Endothelial cell of umbilical vein (primary cell): ENCODE measurements at regions of chr14 and their contacts with region 1.

Region 1: GRCh38 chr14:56339855-56340701 is 221.9 kb downstream of the PELI2 start:
- DNase-seq: peak; percentile 89
- H3K4me3 ChIP-seq: no peak overlapping the region
- H3K27ac ChIP-seq: peak overlapping the region; percentile 55
- H3K4me1 ChIP-seq: peaks cover 43% of the 10 kb centered on the region
- H3K27me3 ChIP-seq: no peaks in the 10 kb centered on the region
- CTCF ChIP-seq: peak; percentile 86 to 94
- POLR2A ChIP-seq: no peak

Region 2: DNA sequence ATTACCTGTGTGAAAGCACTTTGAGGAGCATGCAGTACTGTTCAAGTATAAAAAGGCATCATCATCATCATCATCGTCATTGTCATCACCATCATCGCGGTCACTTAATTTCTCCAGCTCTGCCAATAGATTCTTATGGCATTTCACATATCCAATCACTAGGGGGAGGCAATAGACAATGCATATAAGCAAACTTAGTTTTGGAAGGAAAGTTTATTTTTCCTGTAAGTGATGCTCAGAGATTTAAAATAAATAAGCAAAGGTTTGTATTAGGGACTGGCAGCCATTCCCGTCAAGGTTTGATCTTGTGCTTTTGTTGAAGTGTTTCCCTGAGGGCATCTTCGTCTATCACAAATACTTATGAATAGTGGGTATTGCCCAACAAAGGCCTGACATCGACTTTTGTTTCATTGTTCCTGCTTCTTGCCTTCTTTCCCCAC is 632.7 kb before region 1 on chr14:
- CTCF ChIA-PET with region 1: interaction called, 27 read pairs
- POLR2A ChIA-PET with region 1: interaction called, 4 read pairs
- dilution Hi-C with region 1: no loop called
- intact Hi-C with region 1: loop called (anchors 1 kb)
- DNase-seq: peak; percentile 51
- H3K4me3 ChIP-seq: no peak overlapping the region
- H3K27ac ChIP-seq: no peak overlapping the region
- H3K4me1 ChIP-seq: no peaks in the 10 kb centered on the region
- H3K27me3 ChIP-seq: no peaks in the 10 kb centered on the region
- CTCF ChIP-seq: peak; percentile 28 to 53
- POLR2A ChIP-seq: no peak

Region 3: GRCh38 chr14:55846826-55847446 is 493.1 kb before region 1 on chr14:
- CTCF ChIA-PET with region 1: interaction called, 5 read pairs
- POLR2A ChIA-PET with region 1: no interaction called
- dilution Hi-C with region 1: no loop called
- intact Hi-C with region 1: loop called (anchors 1 kb)
- DNase-seq: no peak
- H3K4me3 ChIP-seq: no peak overlapping the region
- H3K27ac ChIP-seq: no peak overlapping the region
- H3K4me1 ChIP-seq: peaks cover 8% of the 10 kb centered on the region
- H3K27me3 ChIP-seq: no peaks in the 10 kb centered on the region
- CTCF ChIP-seq: no peak
- POLR2A ChIP-seq: no peak

Region 4: DNA sequence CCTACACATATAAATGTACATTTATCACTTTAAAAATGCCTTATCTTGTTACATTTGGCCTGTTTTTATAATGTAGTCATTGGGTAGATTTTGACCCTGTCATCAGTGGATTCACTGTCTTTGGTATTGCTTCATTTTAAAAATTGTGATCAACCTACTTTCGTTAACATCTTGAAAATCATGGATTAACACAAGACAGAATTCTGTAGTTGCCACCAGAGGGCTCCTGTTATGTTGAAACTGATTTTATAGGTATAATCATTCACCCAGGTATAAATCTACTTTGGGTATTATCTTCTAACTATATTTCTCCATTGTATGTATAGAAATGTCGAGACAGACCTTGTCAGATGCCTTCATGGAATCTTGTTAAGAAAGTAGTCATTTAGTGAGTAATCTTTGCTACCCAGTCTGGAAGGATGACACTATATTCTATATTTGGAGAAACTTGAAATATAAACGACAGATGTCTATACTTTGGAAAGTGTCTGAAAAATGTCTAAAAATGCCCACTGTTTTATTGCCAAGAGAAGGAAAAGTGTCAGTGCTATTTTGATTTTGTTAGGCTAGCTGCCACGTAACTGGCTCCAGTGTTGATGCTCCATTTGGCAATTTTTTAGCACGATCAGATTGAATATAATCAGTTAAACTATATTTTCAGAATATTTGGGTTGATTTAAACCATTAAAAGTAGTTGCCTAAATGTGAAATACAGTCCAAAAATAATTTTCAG is 92.4 kb before region 1 on chr14:
- CTCF ChIA-PET with region 1: interaction called, 30 read pairs
- POLR2A ChIA-PET with region 1: no interaction called
- dilution Hi-C with region 1: no loop called
- intact Hi-C with region 1: loop called (anchors 1 kb)
- DNase-seq: peak; percentile 48
- H3K4me3 ChIP-seq: no peak overlapping the region
- H3K27ac ChIP-seq: no peak overlapping the region
- H3K4me1 ChIP-seq: no peaks in the 10 kb centered on the region
- H3K27me3 ChIP-seq: no peaks in the 10 kb centered on the region
- CTCF ChIP-seq: peak in 1 of 2 donors; percentile 7
- POLR2A ChIP-seq: no peak

Region 5: GRCh38 chr14:56378475-56378877 is 38.4 kb after region 1 on chr14:
- CTCF ChIA-PET with region 1: interaction called, 7 read pairs
- POLR2A ChIA-PET with region 1: no interaction called
- dilution Hi-C with region 1: no loop called
- intact Hi-C with region 1: loop called (anchors 1 kb)
- DNase-seq: peak; percentile 90
- H3K4me3 ChIP-seq: no peak overlapping the region
- H3K27ac ChIP-seq: peak overlapping the region; percentile 54
- H3K4me1 ChIP-seq: peaks cover 24% of the 10 kb centered on the region
- H3K27me3 ChIP-seq: no peaks in the 10 kb centered on the region
- CTCF ChIP-seq: no peak
- POLR2A ChIP-seq: no peak

Region 6: DNA sequence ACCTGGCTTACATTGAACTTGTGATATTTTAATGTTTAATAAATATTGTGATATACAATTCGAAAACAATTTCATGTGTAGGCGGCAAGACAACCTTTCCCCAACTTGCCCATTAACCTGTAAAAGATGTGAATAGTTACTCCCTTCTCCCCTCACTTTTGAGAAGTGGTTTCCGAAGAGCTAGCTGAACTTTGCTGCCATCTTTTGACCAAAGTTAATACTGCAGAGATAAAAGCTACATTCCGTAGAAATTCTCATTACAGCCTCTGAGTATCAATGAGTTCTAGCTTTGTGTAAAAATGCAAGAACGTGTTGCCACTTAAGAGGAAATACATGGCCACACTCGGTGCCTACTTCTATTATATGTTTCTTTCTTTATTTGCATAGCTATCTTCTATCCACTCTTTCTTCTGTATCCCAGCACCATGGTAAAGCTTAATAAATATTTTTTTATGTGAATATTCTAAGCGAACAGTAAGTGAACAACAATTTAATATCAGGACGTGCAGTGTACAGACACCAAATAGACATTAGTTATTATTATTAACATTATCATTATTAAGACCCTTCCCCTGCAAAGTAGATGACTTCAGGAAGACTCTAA is 134.4 kb after region 1 on chr14:
- CTCF ChIA-PET with region 1: interaction called, 23 read pairs
- POLR2A ChIA-PET with region 1: no interaction called
- dilution Hi-C with region 1: no loop called
- intact Hi-C with region 1: loop called (anchors 1 kb)
- DNase-seq: peak; percentile 54
- H3K4me3 ChIP-seq: no peak overlapping the region
- H3K27ac ChIP-seq: no peak overlapping the region
- H3K4me1 ChIP-seq: no peaks in the 10 kb centered on the region
- H3K27me3 ChIP-seq: peaks cover 0 to 8% of the 10 kb centered on the region in 2 experiments
- CTCF ChIP-seq: peak; percentile 63 to 64
- POLR2A ChIP-seq: no peak